Head of caudate nucleus (tissue), 42 donors: ENCODE measurements at regions of chr12 and their contacts with region 1.

Region 1: GRCh38 chr12:64403707-64404469 is at the start of gene XPOT:
- DNase-seq: peak; percentile 85 to 96 (median 93)

Region 2: DNA sequence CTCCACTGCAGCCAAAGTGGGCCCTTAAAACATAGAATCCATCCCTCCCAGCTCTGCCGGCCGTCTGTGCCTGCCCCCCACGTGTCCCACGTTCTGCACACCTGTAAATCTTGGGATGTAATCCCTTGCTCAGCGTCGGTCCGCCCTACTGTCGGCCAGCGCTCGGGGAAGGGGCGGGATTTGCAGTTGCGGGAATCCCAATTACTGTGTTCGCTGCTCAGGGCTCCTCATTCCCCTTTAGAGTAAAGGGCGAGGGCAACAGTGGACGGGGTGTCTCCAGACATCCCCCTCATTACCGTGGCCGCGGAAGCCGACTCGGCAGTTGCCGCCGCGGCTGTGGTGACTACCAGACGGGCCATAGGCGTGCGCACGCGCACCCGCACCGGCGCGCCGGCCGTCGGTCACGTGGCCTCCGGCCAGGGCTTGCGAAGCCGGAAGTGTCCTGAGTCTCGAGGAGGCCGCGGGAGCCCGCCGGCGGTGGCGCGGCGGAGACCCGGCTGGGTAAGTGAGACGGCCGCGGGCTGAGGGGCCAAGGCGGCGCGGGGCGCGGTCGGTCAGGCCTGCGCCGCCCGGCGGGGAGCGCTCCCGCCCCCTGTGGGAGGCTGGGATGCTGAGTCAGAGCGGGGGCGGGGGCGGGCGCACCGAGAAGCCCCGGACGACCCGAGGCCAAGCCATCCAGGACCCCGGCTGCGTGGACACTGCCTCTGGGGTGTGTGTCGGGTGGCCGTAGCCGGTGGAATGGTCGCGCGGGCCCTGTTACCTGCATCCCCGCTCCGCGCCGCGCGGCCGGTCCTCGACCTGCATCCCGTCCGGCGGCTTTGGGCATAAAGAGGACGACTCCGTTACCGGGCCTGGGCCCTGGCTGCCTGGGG is 48.0 kb after region 1 on chr12 and contains the start of gene TBK1:
- intact Hi-C with region 1: loop called (anchors 5 kb)
- DNase-seq: peak; percentile 74 to 97 (median 92)